Activated CD8-positive, alpha-beta T cell treated with anti-CD3 and anti-CD28 coated beads for 36 hours (primary cell): ENCODE measurements at regions of chr6 and their contacts with region 1.

Region 1: GRCh38 chr6:134247231-134247833 is 70.6 kb downstream of the SGK1 start:
- DNase-seq: peak; percentile 92
- ATAC-seq: peak; percentile 88
- H3K4me3 Mint-ChIP-seq: no peak overlapping the region
- H3K27ac Mint-ChIP-seq: peak overlapping the region; percentile 97
- H3K4me1 Mint-ChIP-seq: peaks cover 56% of the 10 kb centered on the region
- H3K27me3 Mint-ChIP-seq: no peaks in the 10 kb centered on the region
- CTCF ChIP-seq: no peak

Region 2: GRCh38 chr6:134288538-134289203 is 41.3 kb after region 1 on chr6:
- CTCF ChIA-PET with region 1: interaction called, 3 read pairs
- POLR2A ChIA-PET with region 1: interaction called, 9 read pairs
- intact Hi-C with region 1: loop called (anchors 1 kb)
- DNase-seq: peak; percentile 31
- ATAC-seq: peak; percentile 81
- H3K4me3 Mint-ChIP-seq: peak overlapping the region; percentile 47
- H3K27ac Mint-ChIP-seq: peak overlapping the region; percentile 90
- H3K4me1 Mint-ChIP-seq: peaks cover 26% of the 10 kb centered on the region
- H3K27me3 Mint-ChIP-seq: no peaks in the 10 kb centered on the region
- CTCF ChIP-seq: no peak

Region 3: GRCh38 chr6:134436281-134436815 is 189.0 kb after region 1 on chr6:
- CTCF ChIA-PET with region 1: interaction called, 3 read pairs
- POLR2A ChIA-PET with region 1: no interaction called
- intact Hi-C with region 1: loop called (anchors 5 kb)
- DNase-seq: peak; percentile 87
- ATAC-seq: peak; percentile 91
- H3K4me3 Mint-ChIP-seq: peak overlapping the region; percentile 60
- H3K27ac Mint-ChIP-seq: peak overlapping the region; percentile 88
- H3K4me1 Mint-ChIP-seq: peaks cover 29% of the 10 kb centered on the region
- H3K27me3 Mint-ChIP-seq: no peaks in the 10 kb centered on the region
- CTCF ChIP-seq: no peak